Right ventricle myocardium superior (tissue), 1 donor: ENCODE measurements at regions of chr1 and their contacts with region 1.

Region 1: GRCh38 chr1:40143891-40144575 is 17.2 kb upstream of the RLF start:
- DNase-seq: no peak
- ATAC-seq: peak; percentile 78

Region 2: DNA sequence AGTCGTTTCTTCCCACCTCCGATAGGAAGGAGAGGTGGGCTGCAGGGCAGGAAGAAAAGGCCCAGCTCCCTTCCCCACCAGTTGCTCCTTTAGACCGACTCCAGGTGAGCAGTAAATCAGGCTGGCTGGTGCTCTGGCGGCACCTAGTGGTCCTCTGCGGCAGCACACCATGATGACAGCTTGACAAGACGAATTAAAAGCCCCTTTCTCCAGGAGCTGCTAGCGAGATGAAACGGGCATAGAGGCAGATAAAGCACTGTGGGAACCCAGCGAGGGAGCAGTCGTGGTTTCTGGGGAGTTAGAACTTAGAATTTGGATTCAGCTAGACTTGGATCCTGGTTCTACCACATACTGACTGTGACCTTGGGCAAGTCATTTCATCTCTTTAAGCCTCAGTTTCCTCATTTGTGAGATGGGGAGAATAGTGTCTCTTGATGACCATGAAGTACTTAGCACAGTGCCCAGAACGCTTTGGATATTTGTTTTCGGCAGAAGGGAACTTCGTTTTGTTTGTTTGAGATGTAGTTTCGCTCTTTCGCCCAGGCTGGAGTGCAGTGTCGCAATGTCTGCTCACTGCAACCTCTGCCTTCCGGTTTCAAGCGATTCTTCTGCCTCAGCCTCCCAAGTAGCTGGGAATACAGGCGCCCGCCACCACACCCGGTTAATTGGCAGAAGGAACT is 194.9 kb after region 1 on chr1:
- intact Hi-C with region 1: loop called (anchors 2 kb)
- DNase-seq: peak; percentile 87
- ATAC-seq: peak; percentile 91

Region 3: GRCh38 chr1:40435471-40435870 is 291.4 kb after region 1 on chr1:
- intact Hi-C with region 1: no loop called
- DNase-seq: no peak
- ATAC-seq: no peak